Activated T-helper 1 cell treated with anti-CD3 and anti-CD28 coated beads, Interleukin-12 subunit alpha, Interleukin-12 subunit beta, Interleukin-2, Interleukin-4 antibody, amounts not matched to agents 30 ng/mL and 10 ng/mL and 1 ng/mL, durations not matched to agents 14 hours and 24 hours and 36 hours (primary cell): ENCODE measurements at regions of chr14 and their contacts with region 1.

Region 1: DNA sequence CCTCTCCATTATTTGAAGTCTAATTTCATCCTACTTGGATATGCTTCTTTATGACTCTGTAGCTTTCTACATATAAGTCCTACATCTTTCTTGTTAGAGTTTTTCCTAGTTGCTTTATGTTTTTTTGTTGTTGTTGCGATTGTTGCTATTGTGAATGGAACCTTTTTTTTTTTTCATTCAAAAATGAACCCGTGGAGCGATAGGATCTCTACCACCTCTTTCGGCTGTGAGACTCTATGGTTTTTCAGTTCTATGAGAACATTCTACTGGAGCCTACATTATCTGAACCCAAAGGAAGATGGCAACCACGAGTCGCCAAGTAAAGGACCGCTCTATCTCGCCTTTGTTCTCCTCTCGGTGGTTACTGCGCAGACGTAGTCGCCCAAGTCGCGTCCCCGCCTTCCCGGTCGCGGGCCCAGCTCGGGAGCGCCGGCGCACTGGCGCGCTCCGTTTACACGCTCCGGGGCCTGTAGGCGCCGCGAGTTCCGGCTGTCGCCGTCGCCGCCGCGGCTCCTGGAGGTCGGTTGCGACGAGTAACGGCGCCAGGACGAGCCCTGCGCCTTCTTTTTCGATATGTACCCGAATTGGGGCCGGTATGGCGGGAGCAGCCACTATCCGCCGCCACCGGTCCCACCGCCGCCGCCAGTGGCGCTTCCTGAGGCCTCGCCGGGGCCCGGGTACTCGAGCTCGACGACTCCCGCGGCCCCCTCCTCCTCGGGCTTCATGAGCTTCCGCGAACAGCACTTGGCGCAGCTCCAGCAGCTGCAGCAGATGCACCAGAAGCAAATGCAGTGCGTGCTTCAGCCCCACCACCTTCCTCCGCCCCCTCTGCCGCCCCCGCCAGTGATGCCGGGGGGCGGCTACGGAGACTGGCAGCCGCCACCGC is at the start of gene YLPM1:
- DNase-seq: peak; percentile 92
- H3K4me3 Mint-ChIP-seq: peak within 1 kb of the TSS; percentile 98
- H3K27ac Mint-ChIP-seq: peak within 1 kb of the TSS; percentile 97
- H3K4me1 Mint-ChIP-seq: peaks cover 43% of the 10 kb centered on the region
- H3K27me3 Mint-ChIP-seq: peaks cover 1% of the 10 kb centered on the region
- total RNA-seq, gene YLPM1: 70.4 and 73.7 TPM in 2 replicates

Region 2: GRCh38 chr14:74084277-74085046 is 678.7 kb before region 1 on chr14 and contains the starts of genes ALDH6A1 and LIN52:
- intact Hi-C with region 1: loop called (anchors 1 kb)
- DNase-seq: peak; percentile 100
- H3K4me3 Mint-ChIP-seq: peak within 1 kb of the TSS; percentile 94
- H3K27ac Mint-ChIP-seq: peak within 1 kb of the TSS; percentile 94
- H3K4me1 Mint-ChIP-seq: peaks cover 45% of the 10 kb centered on the region
- H3K27me3 Mint-ChIP-seq: peaks cover 4% of the 10 kb centered on the region
- total RNA-seq, gene ALDH6A1: 10.8 and 11.0 TPM in 2 replicates
- total RNA-seq, gene LIN52: 15.9 and 17.2 TPM in 2 replicates

Region 3: DNA sequence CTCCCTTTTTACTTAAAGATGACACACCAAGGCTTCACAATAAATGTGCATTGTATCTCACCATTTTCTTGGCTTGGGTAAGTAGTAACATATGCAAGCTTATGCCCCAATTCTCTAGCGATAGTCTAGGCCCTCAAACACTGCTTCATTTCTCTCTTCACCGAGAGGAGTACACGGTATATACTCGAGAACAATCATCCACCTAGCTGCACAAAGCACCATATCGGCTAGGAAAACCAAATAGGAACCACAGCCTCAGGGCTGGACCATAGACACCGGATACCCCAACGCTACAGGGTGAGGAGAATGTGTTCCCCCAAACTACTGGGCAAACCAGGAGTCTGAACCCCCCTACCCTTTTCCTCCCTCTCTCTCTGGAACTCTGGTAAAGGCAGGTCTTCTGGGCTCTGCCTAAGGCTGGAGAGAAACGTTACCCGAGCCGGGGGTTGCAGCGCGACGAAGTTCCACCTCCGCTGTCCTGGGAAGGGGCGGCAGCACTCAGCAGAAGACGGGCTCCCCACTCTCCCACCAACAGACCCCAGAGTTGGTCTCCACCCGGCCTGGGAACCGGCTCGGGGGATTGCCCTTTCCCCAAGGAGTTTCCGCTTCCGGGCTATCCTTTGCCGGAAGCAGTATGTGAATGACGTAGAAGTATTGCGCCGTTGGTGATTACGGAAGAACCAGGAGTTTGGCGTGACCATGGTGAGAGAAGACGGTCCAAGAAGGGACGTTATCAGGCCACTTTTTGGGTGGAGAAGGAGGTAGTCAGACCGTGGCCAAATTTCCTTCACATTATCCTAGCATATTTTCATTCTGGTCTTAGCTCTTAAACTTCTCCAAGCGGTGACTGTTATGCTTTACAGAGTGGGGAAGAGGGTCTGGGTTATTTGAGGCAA is 50.4 kb before region 1 on chr14 and contains the starts of genes AREL1 and FCF1:
- intact Hi-C with region 1: loop called (anchors 1 kb)
- DNase-seq: peak; percentile 83
- H3K4me3 Mint-ChIP-seq: peak within 1 kb of the TSS; percentile 95
- H3K27ac Mint-ChIP-seq: peak within 1 kb of the TSS; percentile 95
- H3K4me1 Mint-ChIP-seq: peaks cover 49% of the 10 kb centered on the region
- H3K27me3 Mint-ChIP-seq: no peaks in the 10 kb centered on the region
- total RNA-seq, gene AREL1: 45.8 and 50.2 TPM in 2 replicates
- total RNA-seq, gene FCF1: 64.5 and 68.2 TPM in 2 replicates

Region 4: GRCh38 chr14:74807853-74808545 is 44.8 kb after region 1 on chr14:
- intact Hi-C with region 1: no loop called
- DNase-seq: no peak
- H3K4me3 Mint-ChIP-seq: no peak overlapping the region
- H3K27ac Mint-ChIP-seq: no peak overlapping the region
- H3K4me1 Mint-ChIP-seq: no peaks in the 10 kb centered on the region
- H3K27me3 Mint-ChIP-seq: no peaks in the 10 kb centered on the region

Region 5: DNA sequence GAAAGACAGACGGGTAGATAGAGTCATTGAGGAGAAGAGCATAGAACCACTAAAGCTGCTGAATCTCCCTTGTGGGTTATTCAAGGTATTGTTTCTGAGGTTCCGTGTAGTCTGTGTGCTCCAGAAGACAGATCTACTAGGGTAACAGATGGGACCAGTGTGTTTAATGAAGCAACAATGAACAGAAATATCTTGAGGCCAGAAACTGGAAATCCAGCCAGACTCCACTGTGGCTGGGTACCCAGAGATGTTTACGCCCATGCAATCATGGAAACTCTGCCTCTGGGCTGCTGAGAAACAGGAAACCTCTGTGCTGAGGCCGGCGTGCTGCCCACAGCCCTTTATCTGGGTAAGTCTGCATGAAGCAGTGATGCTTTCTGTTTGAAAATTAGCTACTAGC is 104.5 kb after region 1 on chr14:
- intact Hi-C with region 1: no loop called
- DNase-seq: peak; percentile 48
- H3K4me3 Mint-ChIP-seq: no peak overlapping the region
- H3K27ac Mint-ChIP-seq: peak overlapping the region; percentile 59
- H3K4me1 Mint-ChIP-seq: peaks cover 29% of the 10 kb centered on the region
- H3K27me3 Mint-ChIP-seq: peaks cover 2% of the 10 kb centered on the region

Region 6: GRCh38 chr14:74881431-74882361 is 118.5 kb after region 1 on chr14 and contains the start of gene DLST:
- intact Hi-C with region 1: loop called (anchors 1 kb)
- DNase-seq: peak; percentile 84
- H3K4me3 Mint-ChIP-seq: peak within 1 kb of the TSS; percentile 100
- H3K27ac Mint-ChIP-seq: peak within 1 kb of the TSS; percentile 99
- H3K4me1 Mint-ChIP-seq: peaks cover 52% of the 10 kb centered on the region
- H3K27me3 Mint-ChIP-seq: no peaks in the 10 kb centered on the region
- total RNA-seq, gene DLST: 98.9 and 107 TPM in 2 replicates

Region 7: DNA sequence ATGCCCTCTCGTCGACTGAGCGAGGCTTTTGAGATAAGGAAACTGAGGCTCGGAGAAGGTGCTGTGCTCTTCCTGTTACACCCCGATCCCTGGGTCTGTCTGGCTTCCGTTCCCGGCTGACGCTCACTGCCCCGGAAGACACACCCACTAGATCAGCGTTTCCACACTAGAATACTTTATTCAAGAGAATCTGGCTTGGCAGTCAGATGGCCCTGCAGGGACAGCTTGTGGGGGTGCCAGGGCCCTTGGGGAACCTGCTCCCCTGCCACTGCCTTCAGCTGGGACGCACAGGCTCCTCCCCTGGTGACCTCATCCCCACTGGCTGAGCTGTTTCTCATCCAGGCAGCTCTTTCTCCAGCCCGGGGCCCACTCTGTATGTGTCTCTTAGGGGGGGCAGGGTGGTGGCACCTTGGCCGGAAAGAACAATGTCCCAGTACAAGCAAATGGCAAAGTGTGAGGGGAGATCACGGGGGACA is 178.6 kb after region 1 on chr14:
- intact Hi-C with region 1: no loop called
- DNase-seq: peak; percentile 51
- H3K4me3 Mint-ChIP-seq: peak overlapping the region; percentile 79
- H3K27ac Mint-ChIP-seq: peak overlapping the region; percentile 89
- H3K4me1 Mint-ChIP-seq: peaks cover 67% of the 10 kb centered on the region
- H3K27me3 Mint-ChIP-seq: no peaks in the 10 kb centered on the region

Region 8: GRCh38 chr14:75126679-75127473 is 363.7 kb after region 1 on chr14 and contains the start of gene NEK9:
- intact Hi-C with region 1: loop called (anchors 5 kb)
- DNase-seq: peak; percentile 86
- H3K4me3 Mint-ChIP-seq: peak within 1 kb of the TSS; percentile 93
- H3K27ac Mint-ChIP-seq: peak within 1 kb of the TSS; percentile 97
- H3K4me1 Mint-ChIP-seq: peaks cover 39% of the 10 kb centered on the region
- H3K27me3 Mint-ChIP-seq: no peaks in the 10 kb centered on the region
- total RNA-seq, gene NEK9: 76.8 and 77.0 TPM in 2 replicates

Region 9: GRCh38 chr14:75982266-75983018 is 1219.3 kb after region 1 on chr14:
- intact Hi-C with region 1: loop called (anchors 5 kb)
- DNase-seq: peak; percentile 75
- H3K4me3 Mint-ChIP-seq: peak overlapping the region; percentile 84
- H3K27ac Mint-ChIP-seq: peak overlapping the region; percentile 85
- H3K4me1 Mint-ChIP-seq: peaks cover 52% of the 10 kb centered on the region
- H3K27me3 Mint-ChIP-seq: peaks cover 5% of the 10 kb centered on the region